CD8-positive, alpha-beta T cell (primary cell): ENCODE measurements at regions of chr9 and their contacts with region 1.

Region 1: GRCh38 chr9:69056191-69056815 is 20.8 kb downstream of the FXN start:
- DNase-seq: no peak
- ATAC-seq: no peak
- H3K4me3 ChIP-seq: no peak overlapping the region
- H3K4me3 Mint-ChIP-seq: no peak overlapping the region
- H3K27ac ChIP-seq: no peak overlapping the region
- H3K27ac Mint-ChIP-seq: no peak overlapping the region
- H3K4me1 ChIP-seq: no peaks in the 10 kb centered on the region
- H3K4me1 Mint-ChIP-seq: peaks cover 12% of the 10 kb centered on the region
- H3K27me3 ChIP-seq: no peaks in the 10 kb centered on the region
- H3K27me3 Mint-ChIP-seq: no peaks in the 10 kb centered on the region
- CTCF ChIP-seq: no peak

Region 2: GRCh38 chr9:69004836-69005235 is 51.5 kb before region 1 on chr9:
- CTCF ChIA-PET with region 1: no interaction called
- POLR2A ChIA-PET with region 1: no interaction called
- intact Hi-C with region 1: no loop called
- DNase-seq: no peak
- ATAC-seq: no peak
- H3K4me3 ChIP-seq: no peak overlapping the region
- H3K4me3 Mint-ChIP-seq: no peak overlapping the region
- H3K27ac ChIP-seq: no peak overlapping the region
- H3K27ac Mint-ChIP-seq: no peak overlapping the region
- H3K4me1 ChIP-seq: no peaks in the 10 kb centered on the region
- H3K4me1 Mint-ChIP-seq: no peaks in the 10 kb centered on the region
- H3K27me3 ChIP-seq: no peaks in the 10 kb centered on the region
- H3K27me3 Mint-ChIP-seq: peaks cover 18% of the 10 kb centered on the region
- CTCF ChIP-seq: no peak

Region 3: GRCh38 chr9:69044240-69045219 is 11.8 kb before region 1 on chr9:
- CTCF ChIA-PET with region 1: interaction called, 10 read pairs
- POLR2A ChIA-PET with region 1: no interaction called
- intact Hi-C with region 1: no loop called
- DNase-seq: no peak
- ATAC-seq: no peak
- H3K4me3 ChIP-seq: no peak overlapping the region
- H3K4me3 Mint-ChIP-seq: no peak overlapping the region
- H3K27ac ChIP-seq: no peak overlapping the region
- H3K27ac Mint-ChIP-seq: peak overlapping the region; percentile 55
- H3K4me1 ChIP-seq: peaks cover 7% of the 10 kb centered on the region
- H3K4me1 Mint-ChIP-seq: peaks cover 35% of the 10 kb centered on the region
- H3K27me3 ChIP-seq: no peaks in the 10 kb centered on the region
- H3K27me3 Mint-ChIP-seq: no peaks in the 10 kb centered on the region
- CTCF ChIP-seq: no peak

Region 4: GRCh38 chr9:69190086-69190862 is 134.0 kb after region 1 on chr9:
- CTCF ChIA-PET with region 1: interaction called, 54 read pairs
- POLR2A ChIA-PET with region 1: no interaction called
- intact Hi-C with region 1: loop called in 1 of 2 experiments (anchors 1 kb)
- DNase-seq: no peak
- ATAC-seq: no peak
- H3K4me3 ChIP-seq: no peak overlapping the region
- H3K4me3 Mint-ChIP-seq: no peak overlapping the region
- H3K27ac ChIP-seq: no peak overlapping the region
- H3K27ac Mint-ChIP-seq: no peak overlapping the region
- H3K4me1 ChIP-seq: no peaks in the 10 kb centered on the region
- H3K4me1 Mint-ChIP-seq: peaks cover 6% of the 10 kb centered on the region
- H3K27me3 ChIP-seq: no peaks in the 10 kb centered on the region
- H3K27me3 Mint-ChIP-seq: no peaks in the 10 kb centered on the region
- CTCF ChIP-seq: no peak

Region 5: DNA sequence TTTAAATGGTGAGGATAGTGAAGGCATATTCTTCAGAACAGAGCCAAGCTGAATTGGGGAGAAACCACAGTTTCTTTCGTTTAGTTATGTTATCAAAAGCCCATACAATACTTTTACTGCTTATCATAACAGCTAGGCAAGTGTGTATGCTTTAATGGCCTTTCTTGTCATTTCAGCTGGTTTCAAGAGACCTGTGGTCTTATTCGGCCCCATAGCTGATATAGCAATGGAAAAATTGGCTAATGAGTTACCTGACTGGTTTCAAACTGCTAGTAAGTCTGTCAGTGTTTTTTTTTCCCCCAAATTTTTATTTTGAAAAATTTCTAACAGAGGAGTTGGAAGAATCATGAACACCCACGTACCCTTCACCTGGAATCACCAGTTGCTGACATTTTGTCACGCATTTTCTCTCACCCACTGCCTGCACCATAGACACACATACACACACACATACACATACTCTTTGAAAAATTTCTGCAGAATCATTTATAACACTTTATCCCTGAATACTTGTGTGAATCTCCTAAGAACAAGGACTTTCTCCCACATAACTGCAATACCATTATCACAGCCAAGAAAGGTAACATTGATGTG is 181.5 kb after region 1 on chr9:
- CTCF ChIA-PET with region 1: no interaction called
- POLR2A ChIA-PET with region 1: no interaction called
- intact Hi-C with region 1: no loop called
- DNase-seq: no peak
- ATAC-seq: no peak
- H3K4me3 ChIP-seq: no peak overlapping the region
- H3K4me3 Mint-ChIP-seq: no peak overlapping the region
- H3K27ac ChIP-seq: no peak overlapping the region
- H3K27ac Mint-ChIP-seq: no peak overlapping the region
- H3K4me1 ChIP-seq: no peaks in the 10 kb centered on the region
- H3K4me1 Mint-ChIP-seq: no peaks in the 10 kb centered on the region
- H3K27me3 ChIP-seq: no peaks in the 10 kb centered on the region
- H3K27me3 Mint-ChIP-seq: no peaks in the 10 kb centered on the region
- CTCF ChIP-seq: no peak